ENCODE measurements at regions of chr3 and their contacts with region 1.

Region 1: DNA sequence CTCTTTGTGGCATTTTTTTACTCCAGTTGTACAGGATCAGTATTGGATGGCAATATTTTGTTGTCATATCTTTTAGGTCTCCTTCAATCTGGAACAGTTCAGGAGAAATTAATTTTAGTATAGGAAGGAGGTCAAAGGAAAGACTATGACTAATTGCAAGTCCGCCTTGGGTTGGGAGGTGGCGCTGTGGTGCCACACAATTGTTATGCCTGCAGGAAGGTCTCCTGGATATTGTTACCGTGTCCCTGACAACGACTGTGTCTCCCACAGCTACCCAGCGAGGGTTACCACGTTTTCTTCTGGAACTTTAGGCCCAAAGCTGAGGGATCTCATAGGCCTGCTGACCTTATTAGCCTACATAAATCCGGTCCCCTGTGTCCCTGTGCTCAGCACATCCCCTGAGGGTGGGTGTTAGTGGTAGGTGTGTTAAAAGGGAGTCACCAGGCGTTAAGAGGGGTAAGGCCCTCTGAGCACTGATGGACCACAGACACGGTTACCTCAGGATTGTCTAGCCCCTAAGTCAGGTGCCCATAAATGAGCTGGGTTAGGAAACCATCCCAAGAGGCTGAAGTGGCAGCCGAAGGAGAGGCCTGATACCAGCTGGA is 31.5 kb downstream of the KCNAB1 start:
- DNase-seq: peak; percentile 77
- H3K4me3 Mint-ChIP-seq: no peak overlapping the region
- H3K27ac Mint-ChIP-seq: no peak overlapping the region
- H3K4me1 Mint-ChIP-seq: peaks cover 3% of the 10 kb centered on the region
- H3K27me3 Mint-ChIP-seq: no peaks in the 10 kb centered on the region

Region 2: GRCh38 chr3:155960060-155960459 is 191.9 kb before region 1 on chr3:
- CTCF ChIA-PET with region 1: no interaction called
- intact Hi-C with region 1: no loop called
- DNase-seq: no peak
- H3K4me3 Mint-ChIP-seq: no peak overlapping the region
- H3K27ac Mint-ChIP-seq: no peak overlapping the region
- H3K4me1 Mint-ChIP-seq: no peaks in the 10 kb centered on the region
- H3K27me3 Mint-ChIP-seq: no peaks in the 10 kb centered on the region

Region 3: DNA sequence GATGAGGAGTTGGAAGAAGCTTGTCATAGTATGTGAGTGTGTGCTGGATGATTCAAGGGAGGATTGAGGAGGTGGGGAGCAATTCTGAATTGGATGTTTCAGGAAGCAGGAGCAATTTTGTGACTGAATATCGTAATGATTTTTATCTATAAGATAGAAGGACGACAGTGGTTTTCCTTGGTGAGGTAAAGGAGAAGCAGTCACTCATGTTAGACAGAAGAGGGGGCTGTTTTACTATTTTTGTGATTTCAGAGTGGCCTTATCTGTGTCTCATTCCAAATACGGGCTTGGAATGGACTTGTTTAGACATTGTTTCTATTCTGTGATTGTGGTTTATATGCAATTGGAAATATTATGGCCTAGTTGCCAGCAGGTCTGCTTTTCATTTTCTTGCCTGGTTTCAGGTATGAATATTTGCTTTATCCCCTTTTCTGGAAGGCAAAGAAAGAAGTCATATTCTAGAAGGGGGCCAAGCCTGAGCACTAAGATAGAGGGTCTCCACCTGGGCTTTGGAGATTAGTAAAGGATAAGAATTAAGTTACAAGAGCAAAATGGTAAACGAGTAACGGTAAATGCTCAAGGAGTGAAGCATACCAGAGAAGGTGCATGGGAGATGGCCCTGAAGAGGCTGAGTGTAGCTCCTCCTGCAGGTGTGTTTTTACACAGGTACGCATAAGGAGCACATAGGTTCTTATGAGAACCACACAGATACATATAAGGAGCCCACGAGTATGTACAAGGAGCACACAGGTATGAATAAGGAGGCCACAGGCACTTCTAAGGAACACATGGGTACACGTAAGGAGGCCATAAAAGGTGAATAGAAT is 156.2 kb before region 1 on chr3:
- CTCF ChIA-PET with region 1: no interaction called
- intact Hi-C with region 1: loop called (anchors 5 kb)
- DNase-seq: no peak
- H3K4me3 Mint-ChIP-seq: no peak overlapping the region
- H3K27ac Mint-ChIP-seq: no peak overlapping the region
- H3K4me1 Mint-ChIP-seq: no peaks in the 10 kb centered on the region
- H3K27me3 Mint-ChIP-seq: no peaks in the 10 kb centered on the region

Region 4: GRCh38 chr3:156382458-156383346 is 230.8 kb after region 1 on chr3:
- CTCF ChIA-PET with region 1: interaction called, 38 read pairs
- intact Hi-C with region 1: loop called (anchors 1 kb)
- DNase-seq: peak; percentile 26
- H3K4me3 Mint-ChIP-seq: no peak overlapping the region
- H3K27ac Mint-ChIP-seq: no peak overlapping the region
- H3K4me1 Mint-ChIP-seq: no peaks in the 10 kb centered on the region
- H3K27me3 Mint-ChIP-seq: peaks cover 10% of the 10 kb centered on the region

Region 5: GRCh38 chr3:156536524-156537231 is 384.8 kb after region 1 on chr3:
- CTCF ChIA-PET with region 1: interaction called, 9 read pairs
- intact Hi-C with region 1: loop called (anchors 1 kb)
- DNase-seq: no peak
- H3K4me3 Mint-ChIP-seq: no peak overlapping the region
- H3K27ac Mint-ChIP-seq: no peak overlapping the region
- H3K4me1 Mint-ChIP-seq: peaks cover 4% of the 10 kb centered on the region
- H3K27me3 Mint-ChIP-seq: no peaks in the 10 kb centered on the region

Region 6: DNA sequence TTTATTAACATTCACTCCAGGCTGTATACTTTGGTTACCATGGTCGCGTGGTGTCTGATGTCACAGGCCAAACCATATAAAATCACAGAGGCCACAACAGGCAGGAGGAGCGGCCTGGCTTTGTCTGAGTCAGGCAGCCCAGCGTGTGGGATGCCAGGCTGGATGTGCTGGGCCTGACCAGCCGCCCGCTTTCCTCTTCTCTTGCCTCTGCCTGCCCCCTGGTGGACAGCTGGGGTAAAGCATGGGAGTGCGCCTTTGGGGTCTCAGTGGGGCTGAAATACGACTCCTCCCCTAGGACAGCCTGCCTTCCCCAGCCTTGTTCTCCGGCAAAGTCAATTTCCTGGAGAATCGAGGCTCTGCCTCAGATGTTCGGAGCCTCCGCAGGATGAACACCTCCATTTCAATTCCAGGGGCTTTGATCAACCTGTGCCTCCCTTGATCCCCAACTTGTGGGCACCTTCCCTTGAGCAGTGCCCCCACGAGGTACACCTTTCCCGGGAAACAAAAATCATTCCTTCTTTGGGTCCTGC is 929.8 kb after region 1 on chr3:
- CTCF ChIA-PET with region 1: interaction called, 11 read pairs
- intact Hi-C with region 1: loop called (anchors 1 kb)
- DNase-seq: peak; percentile 86
- H3K4me3 Mint-ChIP-seq: no peak overlapping the region
- H3K27ac Mint-ChIP-seq: no peak overlapping the region
- H3K4me1 Mint-ChIP-seq: peaks cover 9% of the 10 kb centered on the region
- H3K27me3 Mint-ChIP-seq: no peaks in the 10 kb centered on the region

Measured in activated naive CD4-positive, alpha-beta T cell treated with anti-CD3 and anti-CD28 coated beads for 36 hours (primary cell).